Caco-2 (cell line): ENCODE measurements at regions of chr2 and their contacts with region 1.

Region 1: GRCh38 chr2:134411828-134412638 is 158.2 kb downstream of the MGAT5 start:
- DNase-seq: peak; percentile 76 to 84
- H3K4me3 ChIP-seq: no peak overlapping the region
- H3K4me3 Mint-ChIP-seq: no peak overlapping the region
- H3K27ac Mint-ChIP-seq: no peak overlapping the region
- H3K4me1 ChIP-seq: peaks cover 7% of the 10 kb centered on the region
- H3K4me1 Mint-ChIP-seq: peaks cover 12% of the 10 kb centered on the region
- H3K27me3 ChIP-seq: no peaks in the 10 kb centered on the region
- H3K27me3 Mint-ChIP-seq: no peaks in the 10 kb centered on the region
- CTCF ChIP-seq: peak; percentile 75 to 79

Region 2: GRCh38 chr2:134245340-134245984 is 166.6 kb before region 1 on chr2:
- CTCF ChIA-PET with region 1: interaction called, 10 read pairs
- POLR2A ChIA-PET with region 1: no interaction called
- intact Hi-C with region 1: loop called (anchors 1 kb)
- DNase-seq: peak; percentile 68 to 81
- H3K4me3 ChIP-seq: no peak overlapping the region
- H3K4me3 Mint-ChIP-seq: no peak overlapping the region
- H3K27ac Mint-ChIP-seq: no peak overlapping the region
- H3K4me1 ChIP-seq: no peaks in the 10 kb centered on the region
- H3K4me1 Mint-ChIP-seq: peaks cover 7% of the 10 kb centered on the region
- H3K27me3 ChIP-seq: no peaks in the 10 kb centered on the region
- H3K27me3 Mint-ChIP-seq: no peaks in the 10 kb centered on the region
- CTCF ChIP-seq: peak; percentile 78 to 85

Region 3: GRCh38 chr2:134375935-134376334 is 36.1 kb before region 1 on chr2:
- CTCF ChIA-PET with region 1: interaction called, 16 read pairs
- POLR2A ChIA-PET with region 1: no interaction called
- intact Hi-C with region 1: loop called (anchors 1 kb)
- DNase-seq: peak; percentile 53 to 58
- H3K4me3 ChIP-seq: no peak overlapping the region
- H3K4me3 Mint-ChIP-seq: no peak overlapping the region
- H3K27ac Mint-ChIP-seq: no peak overlapping the region
- H3K4me1 ChIP-seq: 0 out of 2 replicates have a peak, but pooled peaks cover 5% of the 10 kb centered on the region
- H3K4me1 Mint-ChIP-seq: no peaks in the 10 kb centered on the region
- H3K27me3 ChIP-seq: no peaks in the 10 kb centered on the region
- H3K27me3 Mint-ChIP-seq: no peaks in the 10 kb centered on the region
- CTCF ChIP-seq: peak in 1 of 2 experiments; percentile 58

Region 4: DNA sequence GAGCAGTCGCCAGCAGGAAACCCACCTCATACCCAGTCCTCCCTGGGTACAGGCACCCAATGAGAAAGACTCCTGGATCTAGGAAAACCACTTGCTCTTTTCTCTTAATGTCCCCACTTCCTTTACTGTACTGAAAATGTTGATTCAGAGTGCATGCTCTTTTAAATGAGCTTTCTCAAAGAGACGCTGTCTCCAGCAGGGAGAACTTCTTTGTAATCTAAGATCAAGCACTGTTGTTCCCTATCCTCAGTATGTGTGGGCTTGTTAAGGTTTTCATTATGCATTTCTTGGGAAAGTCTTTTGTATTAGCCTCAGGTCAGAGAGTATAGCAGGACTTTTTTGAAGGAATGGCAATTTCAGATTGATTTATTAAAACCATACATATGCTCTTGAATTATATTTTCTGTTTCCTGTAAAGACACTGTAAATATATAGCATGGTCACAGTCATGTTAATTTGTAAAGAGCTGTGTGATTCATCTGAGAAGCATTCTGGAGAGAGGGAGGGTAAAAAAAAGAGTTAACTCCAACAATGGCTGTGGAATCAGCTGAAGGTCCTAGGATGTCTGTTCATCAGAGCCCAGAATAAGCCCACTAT is 19.9 kb after region 1 on chr2:
- CTCF ChIA-PET with region 1: interaction called, 15 read pairs
- POLR2A ChIA-PET with region 1: no interaction called
- intact Hi-C with region 1: loop called (anchors 1 kb)
- DNase-seq: no peak
- H3K4me3 ChIP-seq: no peak overlapping the region
- H3K4me3 Mint-ChIP-seq: peak overlapping the region; percentile 42
- H3K27ac Mint-ChIP-seq: peak overlapping the region; percentile 78
- H3K4me1 ChIP-seq: peaks cover 31% of the 10 kb centered on the region
- H3K4me1 Mint-ChIP-seq: peaks cover 48% of the 10 kb centered on the region
- H3K27me3 ChIP-seq: no peaks in the 10 kb centered on the region
- H3K27me3 Mint-ChIP-seq: no peaks in the 10 kb centered on the region
- CTCF ChIP-seq: no peak